Right ventricle myocardium inferior (tissue), 1 donor: ENCODE measurements at regions of chr9 and their contacts with region 1.

Region 1: DNA sequence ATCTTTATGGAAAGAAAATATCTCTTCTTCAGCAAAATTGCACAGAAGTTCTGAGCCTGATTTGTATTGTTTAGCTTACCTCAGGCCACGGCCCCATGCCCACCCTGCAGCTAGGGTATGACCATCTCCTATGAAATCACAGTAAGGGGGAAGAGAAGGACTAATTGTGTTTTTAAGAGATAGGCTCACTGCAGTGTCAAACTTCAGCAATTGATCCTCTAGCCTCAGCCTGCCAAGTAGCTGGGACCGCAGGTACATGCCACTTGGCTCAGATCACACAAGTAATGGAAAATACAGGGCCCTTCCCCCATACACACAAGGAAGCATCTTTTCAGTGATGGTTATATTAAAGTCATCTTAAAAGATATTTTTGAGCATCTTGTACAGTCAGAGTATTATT is 60.0 kb downstream of the DMAC1 start:
- DNase-seq: no peak
- ATAC-seq: no peak

Region 2: GRCh38 chr9:7289773-7290172 is 449.8 kb before region 1 on chr9:
- intact Hi-C with region 1: no loop called
- DNase-seq: no peak
- ATAC-seq: no peak

Region 3: DNA sequence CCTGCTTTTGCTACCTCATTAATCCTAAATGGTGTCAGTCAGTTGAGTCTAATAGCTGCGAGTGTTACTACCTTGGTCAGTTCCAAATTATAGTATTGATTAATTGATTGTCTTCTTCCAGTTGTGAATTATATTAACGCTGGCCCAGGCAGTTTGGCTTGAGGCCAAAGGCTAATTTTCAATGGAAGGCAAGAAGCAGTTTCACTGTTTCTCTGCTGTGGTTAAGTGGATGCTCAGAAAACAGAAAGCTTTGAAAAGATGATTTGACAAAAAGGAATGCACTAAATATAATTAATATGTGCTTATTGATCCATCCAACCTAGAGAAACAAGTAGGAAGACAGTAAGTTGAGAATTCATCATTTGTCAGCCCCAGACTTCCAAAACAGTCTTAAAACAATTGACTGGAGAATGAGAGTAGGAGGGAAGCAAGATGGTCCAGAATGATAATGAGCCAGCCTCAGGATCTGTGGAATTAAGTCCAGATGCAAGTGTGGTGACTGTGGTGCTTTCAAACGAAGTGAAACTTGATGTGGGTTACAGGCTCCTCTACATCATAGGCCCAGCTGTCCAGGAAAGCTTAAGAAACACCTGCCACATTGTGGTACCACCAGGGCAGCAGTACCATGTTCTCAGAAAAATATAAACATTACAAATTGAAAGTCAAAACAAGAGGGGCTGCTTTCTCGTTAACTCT is 1431.0 kb after region 1 on chr9:
- intact Hi-C with region 1: loop called (anchors 10 kb)
- DNase-seq: no peak
- ATAC-seq: no peak